Activated CD4-positive, alpha-beta T cell treated with anti-CD3 and anti-CD28 coated beads, Interleukin-2, amount 10 ng/mL, durations not matched to agents 24 days and 14 days (primary cell): ENCODE measurements at regions of chr19 and their contacts with region 1.

Region 1: GRCh38 chr19:47112997-47113849 is at the start of gene ZC3H4:
- DNase-seq: peak; percentile 100
- H3K4me3 Mint-ChIP-seq: peak within 1 kb of the TSS; percentile 96
- H3K27ac Mint-ChIP-seq: peak within 1 kb of the TSS; percentile 100
- H3K4me1 Mint-ChIP-seq: peaks cover 31% of the 10 kb centered on the region
- H3K27me3 Mint-ChIP-seq: no peaks in the 10 kb centered on the region
- total RNA-seq, gene ZC3H4: 97.3 and 103 TPM in 2 replicates

Region 2: GRCh38 chr19:46600384-46601317 is 512.6 kb before region 1 on chr19:
- intact Hi-C with region 1: loop called (anchors 5 kb)
- DNase-seq: peak; percentile 99
- H3K4me3 Mint-ChIP-seq: peak overlapping the region; percentile 97
- H3K27ac Mint-ChIP-seq: peak overlapping the region; percentile 100
- H3K4me1 Mint-ChIP-seq: peaks cover 18% of the 10 kb centered on the region
- H3K27me3 Mint-ChIP-seq: no peaks in the 10 kb centered on the region

Region 3: DNA sequence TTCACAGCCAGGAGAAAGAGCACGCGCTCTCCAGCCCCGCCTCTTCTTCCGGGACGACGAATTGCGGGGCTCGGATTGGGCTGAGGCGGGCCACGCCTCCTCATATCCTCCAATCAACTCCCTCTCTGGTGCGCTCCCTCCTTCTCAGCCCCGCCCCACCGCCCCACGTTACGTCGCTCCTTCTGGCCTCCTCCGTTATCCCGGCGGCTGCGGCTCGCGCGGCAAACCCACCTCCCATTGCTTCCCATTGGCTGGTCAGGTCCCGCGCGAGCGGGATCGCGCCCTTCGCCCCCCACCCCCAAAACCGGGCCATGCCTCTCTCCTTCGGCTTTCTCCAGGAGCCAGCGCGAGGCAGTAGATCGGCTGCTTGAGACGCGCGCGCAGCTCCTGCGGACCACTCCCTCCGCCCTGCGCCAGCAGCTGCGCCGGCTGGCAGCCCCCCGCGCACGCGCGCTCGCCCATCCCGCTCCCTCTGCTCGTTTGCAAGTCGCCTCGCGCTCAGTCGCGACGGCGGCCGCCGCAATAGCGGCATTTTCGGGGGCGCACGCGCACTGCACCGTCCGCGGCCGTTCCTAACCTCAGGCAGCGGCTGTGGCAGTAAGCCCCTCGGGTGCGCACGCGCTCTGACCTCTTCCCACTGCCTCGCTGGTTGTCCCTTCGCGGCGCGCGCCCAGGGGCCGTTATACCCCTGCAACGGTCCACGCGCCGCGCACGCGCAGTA is 252.9 kb before region 1 on chr19:
- intact Hi-C with region 1: loop called (anchors 2 kb)
- DNase-seq: peak; percentile 99
- H3K4me3 Mint-ChIP-seq: peak overlapping the region; percentile 85
- H3K27ac Mint-ChIP-seq: peak overlapping the region; percentile 91
- H3K4me1 Mint-ChIP-seq: peaks cover 19% of the 10 kb centered on the region
- H3K27me3 Mint-ChIP-seq: no peaks in the 10 kb centered on the region

Region 4: DNA sequence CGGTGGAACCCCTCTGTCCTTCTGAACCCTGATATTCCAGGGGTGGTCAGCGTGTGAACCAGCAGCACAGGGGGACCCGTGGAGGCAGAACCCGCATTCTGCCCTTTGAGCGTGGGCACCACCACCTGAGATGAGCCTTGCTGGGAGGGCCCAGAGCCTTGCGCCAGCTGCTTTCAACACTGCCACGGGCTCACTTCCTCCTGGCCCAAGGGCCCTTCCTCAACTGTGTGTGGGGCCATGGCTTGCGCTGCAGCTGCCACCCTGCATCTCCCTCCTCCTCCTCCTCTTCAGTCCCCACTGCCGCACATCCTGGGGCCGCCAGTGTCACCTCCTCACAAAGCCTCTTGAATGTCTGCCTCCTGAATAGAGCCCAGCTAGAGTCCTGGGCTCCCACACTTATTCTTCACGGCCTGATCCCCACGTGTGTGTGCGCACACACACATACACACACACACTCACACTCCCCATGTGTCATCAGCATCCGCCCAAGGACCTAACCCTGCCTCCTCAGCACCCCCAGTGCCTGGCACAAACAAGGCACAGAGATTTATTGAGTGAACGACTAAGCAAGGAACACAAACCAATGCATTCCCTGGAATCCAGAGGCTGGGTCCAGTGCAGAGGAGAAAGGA is 37.9 kb before region 1 on chr19:
- intact Hi-C with region 1: loop called (anchors 2 kb)
- DNase-seq: no peak
- H3K4me3 Mint-ChIP-seq: no peak overlapping the region
- H3K27ac Mint-ChIP-seq: peak overlapping the region; percentile 45
- H3K4me1 Mint-ChIP-seq: peaks cover 12% of the 10 kb centered on the region
- H3K27me3 Mint-ChIP-seq: no peaks in the 10 kb centered on the region

Region 5: GRCh38 chr19:47130591-47131227 is 17.5 kb after region 1 on chr19 and contains the start of gene SAE1:
- intact Hi-C with region 1: loop called (anchors 1 kb)
- DNase-seq: peak; percentile 98
- H3K4me3 Mint-ChIP-seq: peak within 1 kb of the TSS; percentile 98
- H3K27ac Mint-ChIP-seq: peak within 1 kb of the TSS; percentile 98
- H3K4me1 Mint-ChIP-seq: peaks cover 47% of the 10 kb centered on the region
- H3K27me3 Mint-ChIP-seq: peaks cover 2% of the 10 kb centered on the region
- total RNA-seq, gene SAE1: 147 and 151 TPM in 2 replicates